BJ (cell line): ENCODE measurements at regions of chr16 and their contacts with region 1.

Region 1: DNA sequence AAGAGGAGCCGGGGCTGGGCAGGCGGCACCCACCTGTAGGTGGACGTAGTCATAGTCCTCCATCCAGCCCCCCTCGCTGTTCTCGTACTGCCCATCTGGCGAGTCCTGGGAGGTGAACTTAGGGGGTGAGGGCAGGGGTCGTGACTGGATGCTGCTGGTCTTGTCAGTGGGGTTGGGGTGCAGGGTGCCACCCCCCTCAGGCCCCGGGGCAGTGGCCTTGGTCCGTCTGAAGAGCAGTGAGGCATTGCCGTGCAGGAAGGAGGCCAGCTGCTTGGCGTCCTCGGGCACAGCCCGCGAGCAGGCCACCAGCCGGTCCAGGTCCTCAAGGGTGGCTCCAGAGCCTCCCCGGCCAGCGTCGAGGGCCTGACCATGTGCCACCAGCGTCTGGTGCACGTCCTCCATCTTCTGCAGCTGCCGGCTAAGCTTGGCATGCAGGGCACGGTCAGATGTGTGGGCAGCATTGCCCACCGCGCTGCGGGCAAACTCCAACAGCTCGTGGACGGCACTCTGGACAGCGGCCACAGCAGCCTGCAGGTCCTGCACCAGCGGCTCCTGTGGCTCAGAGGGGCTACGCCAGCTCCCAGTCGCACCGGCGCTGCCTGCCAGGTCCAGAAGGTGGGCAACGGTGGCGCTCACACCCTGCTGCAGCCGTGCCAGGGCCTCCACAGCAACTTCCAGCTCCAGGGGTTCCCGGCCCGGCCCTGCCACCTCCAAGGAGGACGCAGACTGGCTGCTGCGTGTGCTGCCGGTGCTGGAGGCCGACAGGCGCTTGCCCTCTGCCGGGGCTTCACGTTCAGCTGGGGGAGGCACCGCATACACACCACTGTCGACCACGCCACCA is 16.3 kb downstream of the CTRB1 start:
- DNase-seq: no peak
- H3K4me3 ChIP-seq: no peak overlapping the region
- H3K27me3 ChIP-seq: no peaks in the 10 kb centered on the region
- CTCF ChIP-seq: no peak

Region 2: DNA sequence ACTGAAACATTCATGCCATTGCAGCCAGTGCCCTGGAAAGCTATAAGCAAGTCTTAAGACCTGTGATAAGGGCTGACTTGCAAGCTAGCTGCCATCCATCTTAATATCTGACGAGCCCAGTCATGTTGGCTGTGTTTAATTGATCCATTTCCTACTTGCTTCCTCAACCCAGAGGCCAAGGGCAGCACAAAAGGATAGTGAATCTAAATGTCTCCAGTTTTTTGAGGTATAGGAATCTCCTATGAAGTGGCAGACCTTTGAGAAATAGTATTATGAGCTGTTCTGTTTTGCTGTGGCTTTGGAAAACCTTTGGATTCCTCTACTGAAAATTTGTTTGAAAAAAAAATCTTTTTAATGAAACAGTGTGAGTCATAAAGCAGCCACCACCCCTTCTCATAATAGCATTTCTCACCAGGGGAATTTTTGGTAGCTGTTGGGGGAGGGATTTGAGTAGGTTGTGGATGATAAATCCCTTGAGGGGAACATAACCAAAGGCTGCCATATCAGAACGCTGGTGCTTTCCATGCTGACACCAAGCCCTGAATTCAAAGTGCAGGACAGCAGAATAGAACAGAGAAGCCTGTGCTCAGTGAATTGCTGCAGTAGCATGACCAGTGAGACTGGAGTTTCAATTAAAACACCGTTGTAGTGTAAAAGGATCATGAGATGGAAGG is 223.3 kb before region 1 on chr16:
- CTCF ChIA-PET with region 1: no interaction called
- POLR2A ChIA-PET with region 1: no interaction called
- DNase-seq: peak; percentile 81
- H3K4me3 ChIP-seq: no peak overlapping the region
- H3K27me3 ChIP-seq: no peaks in the 10 kb centered on the region
- CTCF ChIP-seq: no peak

Region 3: GRCh38 chr16:75250809-75251279 is 15.8 kb after region 1 on chr16:
- CTCF ChIA-PET with region 1: interaction called, 22 read pairs
- POLR2A ChIA-PET with region 1: no interaction called
- DNase-seq: no peak
- H3K4me3 ChIP-seq: peak overlapping the region; percentile 84
- H3K27me3 ChIP-seq: no peaks in the 10 kb centered on the region
- CTCF ChIP-seq: no peak

Region 4: GRCh38 chr16:75279305-75279704 is 44.2 kb after region 1 on chr16:
- CTCF ChIA-PET with region 1: interaction called, 13 read pairs
- POLR2A ChIA-PET with region 1: no interaction called
- DNase-seq: no peak
- H3K4me3 ChIP-seq: no peak overlapping the region
- H3K27me3 ChIP-seq: no peaks in the 10 kb centered on the region
- CTCF ChIP-seq: no peak

Region 5: GRCh38 chr16:75319513-75320411 is 84.7 kb after region 1 on chr16:
- CTCF ChIA-PET with region 1: interaction called, 12 read pairs
- POLR2A ChIA-PET with region 1: no interaction called
- DNase-seq: peak; percentile 81
- H3K4me3 ChIP-seq: peak overlapping the region; percentile 26
- H3K27me3 ChIP-seq: no peaks in the 10 kb centered on the region
- CTCF ChIP-seq: 0 out of 2 replicates have a peak, but pooled peaks have one; percentile 10

Region 6: DNA sequence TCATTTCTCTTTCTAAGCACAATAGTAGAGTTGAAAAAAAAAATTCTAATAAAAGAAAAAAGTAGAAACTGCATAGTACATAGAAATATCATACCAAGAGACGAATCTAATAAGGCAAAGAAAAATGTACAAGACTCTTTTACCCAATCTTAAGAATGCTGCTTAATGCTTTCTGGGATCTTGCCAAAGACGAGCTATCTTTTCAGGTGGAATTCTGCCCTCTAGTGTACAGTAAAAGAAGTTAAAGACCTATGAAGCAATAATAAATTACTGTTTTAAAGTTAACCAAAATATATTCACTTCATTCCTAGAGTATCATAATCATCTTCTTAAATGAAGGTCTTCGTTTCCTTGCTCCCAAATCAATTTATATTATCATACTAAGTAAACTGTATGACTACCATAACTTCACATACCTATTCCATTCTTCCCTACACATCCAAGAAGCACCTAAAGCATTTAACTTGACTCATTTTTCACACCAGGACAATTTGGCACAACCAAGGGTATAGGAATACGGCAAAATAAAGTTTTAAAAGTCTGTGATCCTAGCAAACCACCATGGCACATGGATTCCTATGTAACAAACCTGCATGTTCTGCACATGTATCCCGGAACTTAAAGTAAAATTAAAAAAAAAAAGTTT is 150.6 kb after region 1 on chr16:
- CTCF ChIA-PET with region 1: interaction called, 40 read pairs
- POLR2A ChIA-PET with region 1: no interaction called
- DNase-seq: no peak
- H3K4me3 ChIP-seq: no peak overlapping the region
- H3K27me3 ChIP-seq: no peaks in the 10 kb centered on the region
- CTCF ChIP-seq: peak; percentile 41; the same call in 1 of the 2 replicates

Region 7: GRCh38 chr16:76705892-76706291 is 1470.8 kb after region 1 on chr16:
- CTCF ChIA-PET with region 1: no interaction called
- POLR2A ChIA-PET with region 1: no interaction called
- DNase-seq: no peak
- H3K4me3 ChIP-seq: no peak overlapping the region
- H3K27me3 ChIP-seq: no peaks in the 10 kb centered on the region
- CTCF ChIP-seq: no peak